ENCODE measurements at regions of chr17 and their contacts with region 1.

Region 1: DNA sequence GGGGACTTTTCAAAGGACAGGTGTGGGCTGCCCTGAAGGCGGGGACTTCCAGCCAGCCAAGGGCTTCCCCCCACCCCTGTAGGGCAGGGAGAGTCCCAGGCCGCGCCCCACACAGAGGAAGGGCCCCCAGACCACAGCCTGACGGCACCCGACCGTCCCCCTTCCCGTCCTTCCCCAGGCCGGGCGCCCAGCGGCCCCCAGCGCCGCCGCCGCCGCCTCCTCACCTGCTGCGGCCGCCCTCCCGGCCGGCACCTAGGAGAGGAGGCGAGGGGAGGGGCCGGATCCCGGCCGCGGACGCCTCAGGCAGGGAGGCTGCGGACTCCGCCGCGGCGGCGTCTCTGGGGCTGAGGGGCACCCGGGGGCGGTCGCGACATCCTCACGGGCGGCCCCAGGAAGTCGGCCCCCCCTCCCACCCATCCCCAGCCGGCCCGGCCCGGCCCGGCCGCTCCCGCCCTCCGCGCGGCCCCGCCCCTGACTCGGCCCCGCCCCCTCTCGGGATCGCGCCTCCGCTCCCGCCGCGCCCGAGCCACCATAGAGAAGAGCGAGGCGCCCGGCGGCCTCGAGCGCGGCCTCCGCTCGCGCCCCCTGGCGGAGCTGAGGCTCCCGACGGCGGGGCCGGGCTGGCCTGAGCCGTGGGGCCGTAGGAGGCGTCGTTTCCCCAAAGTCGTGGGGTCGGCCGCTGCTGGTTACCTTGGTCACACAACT is 25.5 kb upstream of the RFFL start:
- DNase-seq: peak; percentile 90 to 95
- ATAC-seq: peak; percentile 79 to 95 (median 82)
- H3K4me3 ChIP-seq: peak overlapping the region; percentile 72
- H3K4me3 Mint-ChIP-seq: peak overlapping the region; percentile 89
- H3K27ac ChIP-seq: peak overlapping the region; percentile 95
- H3K27ac Mint-ChIP-seq: peak overlapping the region; percentile 95 to 97
- H3K4me1 ChIP-seq: peaks cover 25% of the 10 kb centered on the region
- H3K4me1 Mint-ChIP-seq: peaks cover 27 to 29% of the 10 kb centered on the region in 2 donors
- H3K27me3 ChIP-seq: no peaks in the 10 kb centered on the region
- H3K27me3 Mint-ChIP-seq: no peaks in the 10 kb centered on the region
- CTCF ChIP-seq: peak; percentile 78

Region 2: DNA sequence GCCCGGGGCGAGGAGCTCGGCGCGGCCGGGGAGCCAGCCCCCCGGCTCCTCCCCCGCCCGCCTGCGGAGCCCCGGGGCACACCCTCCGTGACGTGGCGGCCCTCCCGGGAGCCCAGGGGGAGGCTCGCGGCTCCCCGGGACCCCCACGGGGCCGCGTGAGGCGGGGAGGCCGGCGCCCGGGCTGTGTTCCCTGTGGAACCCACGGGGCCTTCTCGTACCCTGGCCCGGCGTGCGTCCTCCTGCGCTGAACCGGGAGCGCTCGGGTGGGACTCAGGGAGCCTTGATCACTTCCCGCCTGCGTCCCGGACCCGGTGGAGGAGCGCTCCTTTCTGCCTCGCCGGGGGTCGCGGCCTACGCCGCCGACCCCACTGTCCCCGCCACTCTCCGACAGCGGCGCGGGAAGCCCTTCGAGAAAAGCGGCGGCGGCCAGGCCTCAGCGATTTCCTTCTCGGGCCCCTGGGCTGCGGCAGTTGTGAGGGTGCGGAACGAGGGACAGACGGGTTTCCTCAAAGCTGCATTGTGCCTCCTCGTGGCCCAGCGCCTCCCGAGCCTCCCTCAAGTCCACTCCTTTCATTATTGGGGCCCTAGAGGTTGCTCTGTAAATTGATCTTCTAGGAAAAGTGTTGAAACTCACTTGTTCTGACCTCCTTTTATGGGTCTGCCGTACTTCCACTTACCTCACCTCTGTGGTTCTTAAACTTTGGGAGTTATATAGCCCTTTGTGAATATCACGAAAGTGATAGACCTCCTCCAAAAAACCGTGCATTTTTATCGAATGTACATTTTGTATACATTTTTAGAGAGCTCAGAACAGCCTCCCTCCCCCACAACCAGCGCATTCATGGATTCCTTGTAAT is 108.1 kb before region 1 on chr17:
- intact Hi-C with region 1: loop called (anchors 5 kb)
- DNase-seq: peak; percentile 85 to 88
- ATAC-seq: peak; percentile 86 to 92 (median 88)
- H3K4me3 ChIP-seq: peak overlapping the region; percentile 92
- H3K4me3 Mint-ChIP-seq: peak overlapping the region; percentile 93
- H3K27ac ChIP-seq: peak overlapping the region; percentile 99
- H3K27ac Mint-ChIP-seq: peak overlapping the region; percentile 93 to 97
- H3K4me1 ChIP-seq: peaks cover 10% of the 10 kb centered on the region
- H3K4me1 Mint-ChIP-seq: peaks cover 38 to 42% of the 10 kb centered on the region in 2 donors
- H3K27me3 ChIP-seq: no peaks in the 10 kb centered on the region
- H3K27me3 Mint-ChIP-seq: no peaks in the 10 kb centered on the region
- CTCF ChIP-seq: no peak

Region 3: GRCh38 chr17:35022536-35023063 is 66.4 kb before region 1 on chr17:
- intact Hi-C with region 1: loop called (anchors 1 kb)
- DNase-seq: peak; percentile 74 to 85
- ATAC-seq: peak; percentile 97 to 99 (median 99)
- H3K4me3 ChIP-seq: no peak overlapping the region
- H3K4me3 Mint-ChIP-seq: peak overlapping the region; percentile 75
- H3K27ac ChIP-seq: peak overlapping the region; percentile 90
- H3K27ac Mint-ChIP-seq: peak overlapping the region; percentile 99
- H3K4me1 ChIP-seq: peaks cover 25% of the 10 kb centered on the region
- H3K4me1 Mint-ChIP-seq: peaks cover 31 to 38% of the 10 kb centered on the region in 2 donors
- H3K27me3 ChIP-seq: no peaks in the 10 kb centered on the region
- H3K27me3 Mint-ChIP-seq: no peaks in the 10 kb centered on the region
- CTCF ChIP-seq: no peak

Region 4: DNA sequence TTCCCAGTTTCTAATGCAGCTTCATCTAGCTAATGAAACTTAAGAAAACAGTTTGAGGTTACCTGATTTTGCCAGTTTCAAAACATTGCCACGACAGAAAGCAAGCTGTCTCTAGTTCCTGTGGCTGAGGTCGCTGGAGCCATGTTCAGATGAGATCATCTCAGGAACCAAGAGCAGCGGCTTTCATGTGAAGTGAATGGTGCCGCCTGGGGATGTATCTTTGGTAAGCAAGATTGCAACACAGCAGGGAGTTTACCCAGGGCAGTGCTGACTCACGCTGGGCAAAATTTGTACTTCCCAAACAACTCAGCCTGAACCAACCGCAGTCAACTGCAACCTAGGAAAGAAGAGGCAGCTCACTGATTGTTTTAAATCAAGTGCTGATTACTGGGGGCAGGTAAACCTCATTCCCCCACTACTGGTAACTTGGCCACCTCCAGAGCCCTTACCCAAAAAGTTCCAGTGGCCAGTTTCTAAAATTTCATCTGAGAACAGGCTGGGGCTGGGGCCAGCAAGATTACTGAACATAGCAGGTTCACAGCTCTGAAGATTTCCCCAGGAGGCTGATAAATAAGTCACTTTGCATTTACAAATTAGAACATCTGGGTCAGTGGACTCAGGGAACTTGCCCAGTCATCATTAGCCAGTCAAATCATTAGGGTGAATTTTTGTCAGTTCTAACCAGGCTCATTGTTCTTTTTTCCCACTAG is 25.4 kb before region 1 on chr17 and contains the start of gene RFFL:
- intact Hi-C with region 1: loop called (anchors 1 kb)
- DNase-seq: peak; percentile 78 to 96
- ATAC-seq: peak; percentile 92 to 98 (median 95)
- H3K4me3 ChIP-seq: peak within 1 kb of the TSS; percentile 23
- H3K4me3 Mint-ChIP-seq: peak within 1 kb of the TSS; percentile 59
- H3K27ac ChIP-seq: peak within 1 kb of the TSS; percentile 82
- H3K27ac Mint-ChIP-seq: peak within 1 kb of the TSS; percentile 98 to 99
- H3K4me1 ChIP-seq: peaks cover 16% of the 10 kb centered on the region
- H3K4me1 Mint-ChIP-seq: peaks cover 49 to 58% of the 10 kb centered on the region in 2 donors
- H3K27me3 ChIP-seq: no peaks in the 10 kb centered on the region
- H3K27me3 Mint-ChIP-seq: no peaks in the 10 kb centered on the region
- CTCF ChIP-seq: no peak
- total RNA-seq, gene RFFL: 50.0 to 86.6 (median 75.9) TPM

Measured in natural killer cell (primary cell).